Gastrocnemius medialis (tissue), 4 donors: ENCODE measurements at regions of chr12 and their contacts with region 1.

Region 1: DNA sequence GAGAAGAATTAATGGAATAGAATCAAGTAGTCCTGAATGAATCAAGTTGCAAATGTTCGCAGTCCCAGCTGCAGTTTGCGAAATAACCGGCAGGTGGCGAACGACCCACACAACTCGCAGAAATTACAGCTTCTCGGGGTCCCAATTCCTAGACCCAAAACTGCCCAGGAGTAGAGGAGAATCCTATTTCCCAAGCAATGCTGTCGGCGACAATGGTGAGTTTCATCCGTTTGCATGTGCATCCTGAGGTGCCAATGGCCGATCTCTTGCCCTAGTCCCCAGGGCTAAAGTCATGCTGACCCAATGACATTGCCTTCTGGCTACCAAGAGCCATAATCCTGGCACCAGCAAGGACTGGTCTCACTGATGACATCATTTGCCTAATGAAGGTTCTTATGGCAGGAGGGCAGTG is 8.5 kb upstream of the ASCL1 start:
- DNase-seq: no peak
- ATAC-seq: no peak
- H3K4me3 ChIP-seq: no peak overlapping the region
- H3K27ac ChIP-seq: no peak overlapping the region
- H3K4me1 ChIP-seq: peaks cover 0 to 4% of the 10 kb centered on the region in 2 donors
- H3K27me3 ChIP-seq: peaks cover 24 to 36% (median 28%) of the 10 kb centered on the region in 3 donors
- CTCF ChIP-seq: peak; percentile 9 to 66 (median 53)
- POLR2A ChIP-seq: no peak

Region 2: DNA sequence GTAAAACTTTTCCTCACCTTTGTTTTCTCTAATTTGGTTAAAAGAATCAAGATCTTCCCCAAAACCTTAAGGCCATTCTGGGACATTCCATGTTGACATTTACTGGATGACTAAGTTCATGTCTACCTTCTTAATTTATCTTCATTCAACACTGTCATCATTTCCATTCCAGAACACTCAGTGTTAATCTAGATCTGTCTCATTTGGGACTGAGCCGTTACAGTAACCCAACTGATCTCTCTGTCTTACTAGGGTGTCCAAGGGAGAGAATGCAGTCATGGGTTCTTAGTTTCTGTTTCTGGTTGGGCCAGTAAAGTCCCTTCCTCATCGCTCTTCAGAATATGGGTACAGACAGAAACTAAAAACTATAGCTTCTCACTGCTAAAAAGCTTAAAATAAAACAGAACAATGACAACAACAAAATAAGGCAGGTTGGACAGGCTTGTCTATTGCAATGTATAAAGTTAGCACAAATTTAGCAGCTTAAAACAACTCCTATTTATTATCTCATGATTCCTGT is 153.3 kb after region 1 on chr12:
- in situ Hi-C with region 1: no loop called
- intact Hi-C with region 1: no loop called
- DNase-seq: no peak
- ATAC-seq: no peak
- H3K4me3 ChIP-seq: no peak overlapping the region
- H3K27ac ChIP-seq: no peak overlapping the region
- H3K4me1 ChIP-seq: no peaks in the 10 kb centered on the region
- H3K27me3 ChIP-seq: no peaks in the 10 kb centered on the region
- CTCF ChIP-seq: no peak
- POLR2A ChIP-seq: no peak

Region 3: GRCh38 chr12:103144278-103144677 is 195.3 kb after region 1 on chr12:
- in situ Hi-C with region 1: no loop called
- intact Hi-C with region 1: no loop called
- DNase-seq: no peak
- ATAC-seq: no peak
- H3K4me3 ChIP-seq: no peak overlapping the region
- H3K27ac ChIP-seq: no peak overlapping the region
- H3K4me1 ChIP-seq: no peaks in the 10 kb centered on the region
- H3K27me3 ChIP-seq: no peaks in the 10 kb centered on the region
- CTCF ChIP-seq: no peak
- POLR2A ChIP-seq: no peak

Region 4: DNA sequence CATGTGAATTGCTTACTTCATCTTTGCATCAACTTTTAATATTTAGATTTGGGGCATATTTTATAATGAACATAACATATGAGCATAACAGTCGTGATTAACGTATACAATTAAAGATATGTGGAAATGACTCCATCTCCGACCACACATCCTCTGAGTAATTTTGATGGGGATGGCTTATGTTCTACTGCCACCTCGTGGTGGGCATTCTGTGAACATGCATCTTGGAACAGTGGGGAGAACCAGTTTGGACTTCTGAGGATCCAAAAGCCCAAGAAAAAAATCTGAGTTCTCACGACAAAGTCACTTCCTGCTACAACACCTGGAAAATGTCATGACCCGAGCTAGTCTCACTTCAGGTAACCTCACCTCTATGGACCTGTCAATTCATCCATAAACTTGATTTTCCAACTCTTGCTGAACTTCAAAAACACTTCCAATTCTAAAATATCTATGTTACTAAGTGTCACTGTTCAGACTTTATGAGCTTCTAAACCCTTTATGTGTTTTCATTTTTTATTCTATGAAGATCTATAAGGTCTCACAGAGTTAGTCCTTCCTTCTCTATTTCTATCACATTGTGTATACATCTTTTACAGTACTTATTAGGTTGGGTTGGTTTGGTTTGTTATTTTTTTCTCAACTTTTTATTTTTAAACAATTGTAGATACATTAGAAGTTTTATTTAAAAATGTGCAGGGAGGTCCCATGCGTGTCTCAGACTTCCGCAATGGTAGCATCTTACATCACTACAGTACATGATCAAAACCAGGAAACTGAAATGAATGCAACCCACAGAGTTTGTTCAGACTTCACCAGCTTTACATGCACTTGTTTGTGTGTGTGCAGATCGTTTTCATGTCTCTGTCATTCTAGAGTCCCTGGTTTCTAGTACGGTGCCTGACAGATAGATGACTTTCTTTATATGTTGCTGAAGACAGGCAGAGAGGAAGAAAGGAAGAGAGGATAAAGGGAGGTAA is 600.0 kb after region 1 on chr12:
- in situ Hi-C with region 1: loop called (anchors 5 to 25 kb)
- intact Hi-C with region 1: loop called (anchors 5 kb)
- DNase-seq: peak in 1 of 2 donors; percentile 17
- ATAC-seq: no peak
- H3K4me3 ChIP-seq: no peak overlapping the region
- H3K27ac ChIP-seq: no peak overlapping the region
- H3K4me1 ChIP-seq: no peaks in the 10 kb centered on the region
- H3K27me3 ChIP-seq: peaks cover 0 to 2% (median 0%) of the 10 kb centered on the region in 3 donors
- CTCF ChIP-seq: peak in 4 of 5 experiments; percentile 34 to 71 (median 54)
- POLR2A ChIP-seq: no peak

Region 5: GRCh38 chr12:103560604-103561573 is 611.9 kb after region 1 on chr12:
- in situ Hi-C with region 1: loop called in 2 of 4 experiments (anchors 10 to 25 kb)
- intact Hi-C with region 1: no loop called
- DNase-seq: no peak
- ATAC-seq: no peak
- H3K4me3 ChIP-seq: no peak overlapping the region
- H3K27ac ChIP-seq: no peak overlapping the region
- H3K4me1 ChIP-seq: no peaks in the 10 kb centered on the region
- H3K27me3 ChIP-seq: no peaks in the 10 kb centered on the region
- CTCF ChIP-seq: no peak
- POLR2A ChIP-seq: no peak